WTC11 (cell line): ENCODE measurements at regions of chr1 and their contacts with region 1.

Region 1: DNA sequence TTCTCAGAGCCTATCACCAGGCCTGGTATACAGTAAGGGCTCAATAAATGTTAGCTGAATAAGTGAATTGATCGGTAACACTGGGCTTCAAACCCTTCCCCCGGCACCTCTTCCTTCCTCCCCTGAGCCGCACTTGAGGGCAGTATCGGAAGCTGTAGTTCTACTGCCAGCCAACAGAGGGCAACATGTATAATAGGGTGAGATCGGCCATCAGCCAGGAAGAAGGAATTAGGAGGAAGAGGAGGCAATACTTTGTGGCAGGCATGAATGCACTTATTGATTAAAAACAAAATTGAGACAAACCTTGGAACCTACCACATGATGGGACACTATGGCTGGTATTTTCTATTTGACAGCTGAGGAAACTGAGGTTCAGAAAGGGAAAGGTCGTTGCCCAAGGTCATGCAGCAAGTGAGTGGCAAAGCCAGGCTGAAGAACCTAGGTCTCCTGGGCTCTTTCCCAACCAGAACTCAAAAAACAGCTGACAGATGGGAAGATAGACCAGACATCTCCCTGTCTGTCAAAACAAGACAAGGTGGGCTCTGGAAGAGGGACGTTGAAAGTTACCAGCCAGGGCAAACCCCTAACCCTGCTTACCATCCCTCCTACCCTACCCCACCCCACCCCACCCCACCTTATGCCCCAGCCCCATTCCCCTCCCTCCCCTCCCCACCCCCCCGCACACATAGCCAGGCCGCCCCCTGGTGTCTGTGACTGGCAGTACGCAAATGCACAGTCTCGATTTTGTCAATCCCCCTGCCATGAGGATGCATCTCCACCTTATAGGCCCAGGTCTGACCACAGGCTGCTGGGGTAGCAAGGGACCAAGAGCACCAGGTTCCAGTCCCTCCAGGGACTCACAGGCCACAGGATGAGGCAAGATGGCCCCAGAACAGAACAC is 107.3 kb upstream of the RUNX3 start:
- DNase-seq: peak; percentile 75
- ATAC-seq: peak; percentile 82
- H3K4me3 Mint-ChIP-seq: no peak overlapping the region
- H3K27ac Mint-ChIP-seq: no peak overlapping the region
- H3K4me1 Mint-ChIP-seq: no peaks in the 10 kb centered on the region
- H3K27me3 Mint-ChIP-seq: no peaks in the 10 kb centered on the region
- CTCF ChIP-seq: peak; percentile 66

Region 2: DNA sequence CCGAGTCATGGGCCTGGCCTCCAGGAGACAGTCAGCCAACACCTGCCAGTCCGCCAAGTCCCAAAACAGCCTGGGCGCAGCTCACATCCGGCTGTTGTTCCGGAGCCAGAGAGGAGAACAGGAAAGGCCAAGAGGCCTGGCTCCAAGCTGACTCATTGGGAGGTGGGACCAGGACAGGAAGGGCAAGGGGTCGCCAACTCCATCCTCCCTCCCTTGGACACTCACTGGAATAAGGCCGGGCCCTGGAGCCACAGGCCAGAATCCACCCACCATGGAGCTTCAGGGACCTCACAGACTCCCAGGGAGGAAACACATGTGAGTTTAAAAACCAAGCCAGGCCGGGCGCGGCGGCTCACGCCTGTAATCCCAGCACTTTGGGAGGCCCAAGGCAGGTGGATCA is 317.3 kb before region 1 on chr1:
- CTCF ChIA-PET with region 1: no interaction called
- POLR2A ChIA-PET with region 1: no interaction called
- DNase-seq: no peak
- ATAC-seq: no peak
- H3K4me3 Mint-ChIP-seq: no peak overlapping the region
- H3K27ac Mint-ChIP-seq: no peak overlapping the region
- H3K4me1 Mint-ChIP-seq: peaks cover 12% of the 10 kb centered on the region
- H3K27me3 Mint-ChIP-seq: no peaks in the 10 kb centered on the region
- CTCF ChIP-seq: no peak

Region 3: DNA sequence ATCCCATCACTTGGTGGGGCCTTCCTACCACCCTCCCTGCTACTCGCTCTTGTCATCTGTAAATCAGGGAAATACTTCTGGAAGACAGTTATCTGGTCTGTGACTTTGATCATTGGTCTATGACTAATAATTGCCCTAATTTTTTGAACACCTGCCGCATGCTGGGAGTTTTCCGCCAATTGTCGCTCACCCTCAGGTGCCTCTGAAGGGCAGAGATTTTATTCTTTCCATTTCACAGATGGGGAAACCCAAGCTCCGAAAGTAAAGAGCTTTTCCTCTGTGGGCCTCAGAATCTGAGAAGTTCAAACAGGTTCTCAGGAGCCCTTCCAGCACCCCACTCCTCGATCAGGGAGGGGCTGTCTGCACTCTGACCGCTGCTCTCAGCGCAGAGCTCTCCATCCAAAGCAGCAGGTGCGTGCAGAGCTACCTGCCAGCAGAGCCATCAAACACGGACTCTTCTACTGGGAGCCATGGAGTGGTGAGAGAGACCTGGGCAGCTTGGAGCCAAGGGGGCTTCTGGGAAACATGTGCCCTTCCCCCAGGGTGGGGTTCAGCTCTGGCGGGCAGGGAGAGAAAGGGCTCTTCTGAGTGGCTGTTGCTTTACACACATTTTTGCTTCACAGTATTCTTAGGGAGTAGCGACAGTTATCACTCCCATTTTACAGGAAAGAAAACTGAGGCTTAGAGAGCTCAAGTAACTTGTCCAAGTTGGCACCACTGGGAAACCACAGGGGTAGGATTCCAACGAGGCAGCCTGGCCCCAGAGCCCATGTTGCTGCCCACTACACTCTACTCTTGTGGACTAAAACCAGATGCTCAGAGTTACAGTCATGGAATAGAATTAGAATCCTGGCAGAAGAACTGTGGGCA is 101.6 kb before region 1 on chr1:
- CTCF ChIA-PET with region 1: interaction called, 27 read pairs
- POLR2A ChIA-PET with region 1: no interaction called
- DNase-seq: no peak
- ATAC-seq: no peak
- H3K4me3 Mint-ChIP-seq: no peak overlapping the region
- H3K27ac Mint-ChIP-seq: no peak overlapping the region
- H3K4me1 Mint-ChIP-seq: peaks cover 51% of the 10 kb centered on the region
- H3K27me3 Mint-ChIP-seq: peaks cover 53% of the 10 kb centered on the region
- CTCF ChIP-seq: no peak

Region 4: GRCh38 chr1:24970399-24970753 is 67.0 kb before region 1 on chr1:
- CTCF ChIA-PET with region 1: interaction called, 12 read pairs
- POLR2A ChIA-PET with region 1: no interaction called
- DNase-seq: peak; percentile 52
- ATAC-seq: peak; percentile 72
- H3K4me3 Mint-ChIP-seq: no peak overlapping the region
- H3K27ac Mint-ChIP-seq: no peak overlapping the region
- H3K4me1 Mint-ChIP-seq: peaks cover 33% of the 10 kb centered on the region
- H3K27me3 Mint-ChIP-seq: peaks cover 3% of the 10 kb centered on the region
- CTCF ChIP-seq: no peak

Region 5: GRCh38 chr1:25026730-25027450 is 10.5 kb before region 1 on chr1:
- CTCF ChIA-PET with region 1: interaction called, 18 read pairs
- POLR2A ChIA-PET with region 1: no interaction called
- DNase-seq: no peak
- ATAC-seq: peak; percentile 73
- H3K4me3 Mint-ChIP-seq: no peak overlapping the region
- H3K27ac Mint-ChIP-seq: no peak overlapping the region
- H3K4me1 Mint-ChIP-seq: peaks cover 21% of the 10 kb centered on the region
- H3K27me3 Mint-ChIP-seq: no peaks in the 10 kb centered on the region
- CTCF ChIP-seq: no peak

Region 6: DNA sequence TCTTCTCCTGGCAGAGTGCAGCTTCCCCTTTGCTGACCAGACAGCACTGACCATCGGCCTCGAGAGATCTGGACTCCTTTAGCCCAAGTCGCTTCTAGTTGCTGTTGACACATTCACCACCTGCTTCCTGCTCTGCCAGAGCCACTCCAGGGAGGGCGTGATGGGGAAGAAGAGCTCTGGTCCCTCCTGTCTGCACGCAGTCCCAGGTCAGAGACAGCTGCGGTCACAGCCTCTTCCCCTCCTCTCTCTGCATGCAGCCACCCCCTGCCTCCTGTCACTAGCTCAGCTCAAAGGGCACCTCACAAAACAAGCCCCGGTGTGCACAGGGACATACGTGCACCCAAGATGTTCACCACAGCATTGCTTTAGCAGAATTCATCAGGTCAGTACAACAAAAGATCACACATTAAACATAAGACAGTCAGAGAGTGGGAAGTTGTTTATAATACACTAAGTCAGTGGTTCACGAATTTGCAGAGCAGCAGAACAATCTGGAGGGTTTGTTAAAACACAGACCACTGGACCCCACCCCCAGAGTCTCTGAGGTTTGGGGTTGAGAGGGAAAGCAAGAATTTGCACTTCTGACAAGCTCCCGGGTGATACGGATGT is 62.0 kb after region 1 on chr1:
- CTCF ChIA-PET with region 1: interaction called, 13 read pairs
- POLR2A ChIA-PET with region 1: no interaction called
- DNase-seq: no peak
- ATAC-seq: no peak
- H3K4me3 Mint-ChIP-seq: no peak overlapping the region
- H3K27ac Mint-ChIP-seq: no peak overlapping the region
- H3K4me1 Mint-ChIP-seq: peaks cover 12% of the 10 kb centered on the region
- H3K27me3 Mint-ChIP-seq: no peaks in the 10 kb centered on the region; the same call in 1 of the 2 replicates
- CTCF ChIP-seq: no peak